Prostate gland (tissue), 2 donors: ENCODE measurements at regions of chr14 and their contacts with region 1.

Region 1: GRCh38 chr14:88189417-88190191 is 133.5 kb downstream of the KCNK10 start:
- DNase-seq: peak; percentile 87
- H3K4me3 ChIP-seq: peak overlapping the region; percentile 9 to 20
- H3K27ac ChIP-seq: no peak overlapping the region
- H3K4me1 ChIP-seq: no peaks in the 10 kb centered on the region
- H3K27me3 ChIP-seq: no peaks in the 10 kb centered on the region
- CTCF ChIP-seq: peak in 3 of 4 experiments; percentile 67 to 79 (median 77)
- POLR2A ChIP-seq: no peak

Region 2: DNA sequence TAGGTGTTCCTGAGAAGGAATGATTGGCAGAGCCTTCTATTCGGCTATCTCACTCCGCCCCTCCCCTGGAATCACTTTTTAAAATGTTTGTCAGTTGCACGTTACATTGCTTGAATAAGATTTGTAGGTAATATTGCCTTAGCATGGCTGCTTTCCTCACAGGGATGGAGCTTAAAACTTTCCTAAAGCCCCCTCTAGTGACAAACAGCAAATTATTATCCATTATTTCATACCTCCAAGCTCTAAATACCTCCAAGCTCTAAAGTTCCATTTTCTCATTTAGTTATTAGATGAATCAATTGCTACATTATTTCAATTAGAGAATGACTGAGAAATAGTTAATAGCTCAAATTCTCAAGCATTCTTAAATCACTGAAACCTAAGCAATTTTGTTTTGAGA is 190.8 kb after region 1 on chr14:
- intact Hi-C with region 1: loop called (anchors 5 kb)
- DNase-seq: no peak
- H3K4me3 ChIP-seq: no peak overlapping the region
- H3K27ac ChIP-seq: no peak overlapping the region
- H3K4me1 ChIP-seq: no peaks in the 10 kb centered on the region
- H3K27me3 ChIP-seq: no peaks in the 10 kb centered on the region
- CTCF ChIP-seq: peak in 2 of 4 experiments; percentile 15 to 26
- POLR2A ChIP-seq: no peak

Region 3: GRCh38 chr14:88562831-88563686 is 373.5 kb after region 1 on chr14 and contains the start of gene ZC3H14:
- intact Hi-C with region 1: loop called (anchors 5 kb)
- DNase-seq: peak; percentile 73
- H3K4me3 ChIP-seq: peak within 1 kb of the TSS; percentile 97 to 99
- H3K27ac ChIP-seq: peak within 1 kb of the TSS; percentile 91 to 94
- H3K4me1 ChIP-seq: no peaks in the 10 kb centered on the region
- H3K27me3 ChIP-seq: no peaks in the 10 kb centered on the region
- CTCF ChIP-seq: peak in 2 of 4 experiments; percentile 12 to 31
- POLR2A ChIP-seq: peak; percentile 77
- total RNA-seq, gene ZC3H14: 79.9 to 103 TPM